ENCODE measurements at regions of chr2 and their contacts with region 1.

Region 1: DNA sequence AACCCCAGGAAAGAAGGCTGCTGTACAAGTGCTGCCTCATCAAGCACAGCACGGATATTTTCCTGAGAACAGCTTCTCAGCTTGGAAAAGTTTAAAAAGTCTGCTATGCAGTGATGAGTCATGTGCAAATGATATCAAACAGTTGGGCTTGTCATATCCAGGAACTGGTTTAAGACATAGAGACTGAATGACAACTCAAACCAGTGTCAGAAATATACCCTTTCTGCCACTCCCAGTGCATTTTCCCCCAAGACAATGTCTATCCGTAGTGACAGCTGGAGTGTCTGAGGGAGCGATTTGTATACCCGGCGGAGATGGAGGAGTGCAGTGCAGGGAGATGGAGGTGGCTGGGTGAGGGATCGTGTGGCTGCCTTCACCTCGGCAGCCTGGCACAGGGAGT is 28.2 kb downstream of the SOX11 start:
- ATAC-seq: no peak
- H3K4me3 ChIP-seq: no peak overlapping the region
- H3K27ac ChIP-seq: no peak overlapping the region
- H3K4me1 ChIP-seq: peaks cover 0 to 6% of the 10 kb centered on the region in 2 donors

Region 2: DNA sequence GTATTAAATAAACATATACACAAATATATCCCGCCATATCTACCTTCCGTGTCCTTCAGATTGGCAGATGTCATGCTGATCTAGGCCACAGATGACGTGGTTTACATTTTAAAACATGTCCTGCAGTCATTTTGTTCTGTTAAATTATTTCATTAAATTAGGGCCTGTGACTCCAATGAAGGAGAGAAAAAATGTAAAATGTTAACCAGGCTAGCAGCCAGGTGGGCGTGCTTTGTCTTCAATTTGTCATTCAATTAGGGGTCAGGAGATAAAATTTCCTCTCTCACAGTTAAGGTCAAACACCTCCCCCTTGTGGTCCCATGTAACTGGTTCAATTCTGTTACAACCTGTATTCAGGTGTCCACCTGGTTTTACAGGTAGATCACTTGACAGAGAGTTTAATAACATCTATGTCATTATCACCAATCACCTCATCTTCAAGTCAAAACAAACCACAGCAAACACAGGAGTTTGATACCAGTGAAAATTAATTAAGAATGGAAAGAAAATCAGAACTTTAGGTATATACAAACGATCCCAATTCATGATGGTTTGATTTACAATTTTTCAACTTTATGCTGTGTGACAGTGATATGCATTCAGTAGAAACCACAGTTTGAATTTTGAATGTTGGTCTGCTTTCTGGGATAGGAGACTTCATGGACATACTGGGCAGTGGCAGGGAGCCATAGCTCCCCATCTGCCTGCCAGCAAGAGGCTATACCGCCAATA is 805.8 kb after region 1 on chr2:
- in situ Hi-C with region 1: loop called in 1 of 9 experiments (anchors 25 kb)
- ATAC-seq: peak in 1 of 8 experiments; percentile 43
- H3K4me3 ChIP-seq: no peak overlapping the region
- H3K27ac ChIP-seq: no peak overlapping the region
- H3K4me1 ChIP-seq: peaks cover 31 to 38% of the 10 kb centered on the region in 2 donors

Region 3: DNA sequence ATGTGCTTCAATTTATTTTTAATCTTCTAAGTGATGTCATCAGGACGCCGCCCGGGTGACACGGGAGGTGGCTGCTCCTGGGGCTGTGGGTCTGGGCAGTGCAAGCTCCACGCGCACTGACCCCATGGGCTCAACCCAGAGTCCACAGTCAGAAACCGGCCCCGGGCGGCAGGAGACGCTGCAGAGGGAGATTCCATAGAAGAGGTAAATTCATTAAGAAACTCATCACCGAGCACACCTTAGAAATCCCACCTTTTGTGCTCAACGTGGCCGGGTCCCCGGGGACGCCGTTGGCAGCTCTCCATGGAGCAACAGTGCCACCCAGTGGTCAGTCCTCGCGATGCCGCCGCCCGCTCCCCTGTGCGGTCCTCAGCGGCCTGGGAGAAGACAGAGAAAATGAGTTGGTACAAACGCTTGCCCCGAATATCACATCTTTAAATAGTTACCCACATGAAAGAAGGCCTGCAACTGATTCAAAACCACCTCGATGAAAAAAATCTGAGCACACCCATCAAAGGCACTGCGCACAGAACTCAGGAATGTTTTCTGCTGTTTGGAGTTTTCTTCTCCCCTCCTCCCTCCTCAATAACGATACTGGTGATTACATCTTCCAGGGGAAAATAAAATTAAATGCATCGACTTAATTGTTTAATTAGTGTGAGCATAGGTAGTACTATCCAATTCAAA is 1052.7 kb after region 1 on chr2:
- in situ Hi-C with region 1: loop called in 3 of 9 experiments (anchors 25 kb)
- ATAC-seq: peak; percentile 75 to 97 (median 82)
- H3K4me3 ChIP-seq: peak overlapping the region; percentile 19 to 39 (median 26)
- H3K27ac ChIP-seq: peak overlapping the region; percentile 84 to 94
- H3K4me1 ChIP-seq: peaks cover 25 to 26% of the 10 kb centered on the region in 2 donors